Naive thymus-derived CD4-positive, alpha-beta T cell (primary cell): ENCODE measurements at regions of chr6 and their contacts with region 1.

Region 1: GRCh38 chr6:152338335-152339125 is 298.6 kb downstream of the SYNE1 start:
- DNase-seq: peak; percentile 23 to 67 (median 51)
- ATAC-seq: peak; percentile 90
- H3K4me3 ChIP-seq: no peak overlapping the region
- H3K4me3 Mint-ChIP-seq: no peak overlapping the region
- H3K27ac ChIP-seq: no peak overlapping the region
- H3K27ac Mint-ChIP-seq: no peak overlapping the region
- H3K4me1 ChIP-seq: no peaks in the 10 kb centered on the region
- H3K4me1 Mint-ChIP-seq: peaks cover 0 to 5% (median 0%) of the 10 kb centered on the region in 7 donors
- H3K27me3 ChIP-seq: no peaks in the 10 kb centered on the region
- H3K27me3 Mint-ChIP-seq: peaks cover 0 to 11% (median 0%) of the 10 kb centered on the region in 5 donors

Region 2: DNA sequence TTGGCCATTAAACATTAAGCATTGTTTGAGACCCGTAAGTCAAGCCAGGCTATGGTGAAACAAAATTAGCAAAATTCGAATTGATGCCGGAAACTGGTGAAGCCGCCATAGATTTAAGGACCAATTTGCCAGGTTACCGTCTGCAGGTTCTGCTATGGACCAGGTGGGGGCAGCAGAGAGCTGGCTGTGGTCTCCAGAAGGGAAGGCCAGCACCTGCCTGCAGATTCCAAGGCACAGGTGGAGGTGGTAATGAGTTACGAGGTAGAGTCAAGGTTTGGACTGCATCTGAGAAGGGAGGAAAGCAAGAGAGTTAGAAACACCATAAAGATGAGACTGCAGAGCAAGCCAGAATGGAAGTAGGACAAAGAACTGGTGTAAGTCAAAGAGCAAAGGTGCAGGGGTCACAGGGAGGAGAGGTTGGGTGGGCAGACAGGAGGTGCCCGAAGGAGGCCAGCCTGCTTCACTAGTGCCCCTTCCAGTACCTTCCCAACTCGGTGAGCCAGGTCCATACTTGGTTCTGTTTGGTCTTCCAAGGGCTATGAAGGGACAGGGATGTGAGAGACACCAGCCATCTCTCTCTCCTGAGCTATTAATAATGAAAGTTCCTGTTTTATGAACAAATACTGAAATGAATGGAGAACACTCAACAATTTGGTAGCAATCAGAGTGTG is 662.6 kb before region 1 on chr6:
- CTCF ChIA-PET with region 1: no interaction called
- POLR2A ChIA-PET with region 1: no interaction called
- intact Hi-C with region 1: loop called in 1 of 2 experiments (anchors 1 kb)
- DNase-seq: peak in 8 of 9 donors; percentile 8 to 54 (median 44)
- ATAC-seq: peak; percentile 79
- H3K4me3 ChIP-seq: no peak overlapping the region
- H3K4me3 Mint-ChIP-seq: no peak overlapping the region
- H3K27ac ChIP-seq: no peak overlapping the region
- H3K27ac Mint-ChIP-seq: peak overlapping the region in 1 of 9 donors; percentile 33
- H3K4me1 ChIP-seq: no peaks in the 10 kb centered on the region
- H3K4me1 Mint-ChIP-seq: peaks cover 0 to 6% (median under 1%) of the 10 kb centered on the region in 7 donors
- H3K27me3 ChIP-seq: no peaks in the 10 kb centered on the region
- H3K27me3 Mint-ChIP-seq: peaks cover 0 to 4% (median under 1%) of the 10 kb centered on the region in 5 donors

Region 3: DNA sequence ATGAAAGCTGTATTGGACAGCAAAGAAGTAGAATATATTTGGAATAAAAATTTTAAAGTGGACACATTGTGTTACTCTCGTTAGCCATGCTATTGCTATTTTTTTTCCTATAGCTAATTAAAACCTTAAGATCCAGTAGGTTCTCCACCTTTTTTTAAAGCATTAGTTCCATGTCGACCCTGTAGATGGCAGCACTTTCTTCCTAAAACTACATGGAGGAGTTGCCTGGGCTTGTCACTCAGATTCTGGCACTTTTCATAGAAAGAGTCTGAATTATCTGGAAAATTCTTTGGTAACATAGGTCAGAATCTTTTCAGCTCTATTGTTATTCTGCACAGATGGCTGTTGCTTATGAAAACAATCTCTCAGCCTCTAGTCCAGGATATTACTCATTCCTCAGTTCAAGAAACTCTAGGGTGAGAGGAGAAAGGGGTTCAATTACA is 573.1 kb before region 1 on chr6:
- CTCF ChIA-PET with region 1: no interaction called
- POLR2A ChIA-PET with region 1: no interaction called
- intact Hi-C with region 1: loop called (anchors 1 to 5 kb)
- DNase-seq: peak in 6 of 9 donors; percentile 17 to 55 (median 36)
- ATAC-seq: peak; percentile 64
- H3K4me3 ChIP-seq: no peak overlapping the region
- H3K4me3 Mint-ChIP-seq: no peak overlapping the region
- H3K27ac ChIP-seq: no peak overlapping the region
- H3K27ac Mint-ChIP-seq: no peak overlapping the region
- H3K4me1 ChIP-seq: no peaks in the 10 kb centered on the region
- H3K4me1 Mint-ChIP-seq: peaks cover 0 to 29% (median 10%) of the 10 kb centered on the region in 7 donors
- H3K27me3 ChIP-seq: no peaks in the 10 kb centered on the region
- H3K27me3 Mint-ChIP-seq: peaks cover 0 to 34% (median 7%) of the 10 kb centered on the region in 5 donors

Region 4: DNA sequence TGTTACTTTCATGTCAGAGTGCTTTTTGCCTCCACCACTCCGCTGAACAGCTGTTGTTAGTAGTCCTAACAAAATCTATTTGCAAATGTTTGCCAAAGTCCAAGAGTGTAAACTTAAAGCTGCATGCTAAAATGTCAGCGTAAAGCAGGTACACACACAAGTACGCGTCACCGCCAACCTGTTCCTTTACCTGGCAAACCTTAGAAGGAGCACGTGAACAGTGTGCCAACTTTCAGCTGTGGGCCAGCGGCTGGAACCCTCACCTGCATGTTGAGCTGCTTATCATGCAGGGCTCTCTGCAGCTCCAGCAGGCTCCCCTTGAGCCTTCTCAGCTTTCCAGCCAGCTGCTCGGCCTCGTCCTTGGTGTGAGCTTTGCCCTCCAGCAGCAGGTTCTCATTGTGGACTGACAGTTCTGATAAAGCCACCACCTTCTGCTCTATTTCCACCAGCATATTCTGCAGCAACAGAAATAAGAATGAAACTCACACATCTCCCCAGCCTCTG is 60.7 kb before region 1 on chr6:
- CTCF ChIA-PET with region 1: interaction called, 13 read pairs
- POLR2A ChIA-PET with region 1: no interaction called
- intact Hi-C with region 1: loop called in 1 of 2 experiments (anchors 1 kb)
- DNase-seq: no peak
- ATAC-seq: no peak
- H3K4me3 ChIP-seq: no peak overlapping the region
- H3K4me3 Mint-ChIP-seq: no peak overlapping the region
- H3K27ac ChIP-seq: no peak overlapping the region
- H3K27ac Mint-ChIP-seq: no peak overlapping the region
- H3K4me1 ChIP-seq: no peaks in the 10 kb centered on the region
- H3K4me1 Mint-ChIP-seq: peaks cover 0 to 2% (median 0%) of the 10 kb centered on the region in 7 donors
- H3K27me3 ChIP-seq: no peaks in the 10 kb centered on the region
- H3K27me3 Mint-ChIP-seq: no peaks in the 10 kb centered on the region

Region 5: GRCh38 chr6:152309648-152310047 is 28.9 kb before region 1 on chr6:
- CTCF ChIA-PET with region 1: interaction called, 7 read pairs
- POLR2A ChIA-PET with region 1: interaction called, 8 read pairs
- intact Hi-C with region 1: loop called in 1 of 2 experiments (anchors 1 kb)
- DNase-seq: peak; percentile 27 to 81 (median 73)
- ATAC-seq: peak; percentile 94
- H3K4me3 ChIP-seq: no peak overlapping the region
- H3K4me3 Mint-ChIP-seq: peak overlapping the region in 5 of 10 donors; percentile 17 to 59 (median 38)
- H3K27ac ChIP-seq: no peak overlapping the region
- H3K27ac Mint-ChIP-seq: peak overlapping the region in 3 of 9 donors; percentile 36 to 65 (median 39)
- H3K4me1 ChIP-seq: peaks cover 6 to 21% of the 10 kb centered on the region in 2 donors
- H3K4me1 Mint-ChIP-seq: peaks cover 7 to 35% (median 33%) of the 10 kb centered on the region in 7 donors
- H3K27me3 ChIP-seq: no peaks in the 10 kb centered on the region
- H3K27me3 Mint-ChIP-seq: peaks cover 0 to 10% (median 0%) of the 10 kb centered on the region in 5 donors

Region 6: DNA sequence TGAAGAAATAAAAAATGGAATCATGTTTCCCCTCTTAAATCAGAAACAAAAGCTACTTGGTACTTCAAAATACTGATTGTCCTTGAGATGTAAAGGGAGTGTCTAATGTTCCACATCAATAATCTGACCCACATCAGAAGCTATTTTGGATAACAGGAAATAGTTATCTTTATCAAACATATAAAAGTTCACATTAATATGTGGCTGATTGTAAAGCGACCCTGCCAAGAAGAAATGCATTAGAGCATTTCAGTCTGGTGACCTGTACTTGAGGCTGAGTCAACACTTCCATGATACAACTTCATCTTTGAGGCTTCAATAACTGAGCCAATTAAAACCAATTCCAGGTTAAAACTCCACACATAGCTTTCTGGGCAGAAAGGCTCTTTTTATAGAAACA is 266.8 kb after region 1 on chr6:
- CTCF ChIA-PET with region 1: no interaction called
- POLR2A ChIA-PET with region 1: no interaction called
- intact Hi-C with region 1: no loop called
- DNase-seq: no peak
- ATAC-seq: no peak
- H3K4me3 ChIP-seq: no peak overlapping the region
- H3K4me3 Mint-ChIP-seq: no peak overlapping the region
- H3K27ac ChIP-seq: no peak overlapping the region
- H3K27ac Mint-ChIP-seq: no peak overlapping the region
- H3K4me1 ChIP-seq: no peaks in the 10 kb centered on the region
- H3K4me1 Mint-ChIP-seq: peaks cover 0 to 3% (median 0%) of the 10 kb centered on the region in 7 donors
- H3K27me3 ChIP-seq: no peaks in the 10 kb centered on the region
- H3K27me3 Mint-ChIP-seq: peaks cover 0 to 9% (median 4%) of the 10 kb centered on the region in 5 donors

Region 7: GRCh38 chr6:153032255-153032882 is 693.8 kb after region 1 on chr6:
- CTCF ChIA-PET with region 1: no interaction called
- POLR2A ChIA-PET with region 1: no interaction called
- intact Hi-C with region 1: no loop called
- DNase-seq: peak in 1 of 9 donors; percentile 8
- ATAC-seq: no peak
- H3K4me3 ChIP-seq: no peak overlapping the region
- H3K4me3 Mint-ChIP-seq: no peak overlapping the region
- H3K27ac ChIP-seq: no peak overlapping the region
- H3K27ac Mint-ChIP-seq: no peak overlapping the region
- H3K4me1 ChIP-seq: no peaks in the 10 kb centered on the region
- H3K4me1 Mint-ChIP-seq: no peaks in the 10 kb centered on the region
- H3K27me3 ChIP-seq: no peaks in the 10 kb centered on the region
- H3K27me3 Mint-ChIP-seq: peaks cover 8 to 32% (median 15%) of the 10 kb centered on the region in 5 donors

Region 8: DNA sequence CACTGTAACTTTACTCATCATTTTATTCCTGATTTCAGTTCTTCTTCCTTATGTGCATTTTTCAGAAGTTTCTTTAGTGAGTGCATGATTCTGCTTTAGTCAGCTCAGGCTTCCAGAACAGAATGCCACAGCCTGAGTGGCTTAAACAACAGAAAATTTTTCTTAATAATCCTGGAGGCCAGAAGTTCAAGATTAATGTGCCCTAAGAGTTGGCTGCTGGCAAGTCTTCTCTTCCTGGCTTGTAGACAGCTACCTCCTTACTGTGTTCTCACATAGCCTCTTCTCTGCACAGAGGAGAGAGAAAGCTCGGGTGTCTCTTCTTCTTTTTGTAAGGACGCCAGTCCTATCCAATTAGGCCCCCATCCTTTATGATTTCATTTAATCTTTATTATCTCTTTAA is 1235.7 kb after region 1 on chr6:
- CTCF ChIA-PET with region 1: no interaction called
- POLR2A ChIA-PET with region 1: no interaction called
- intact Hi-C with region 1: no loop called
- DNase-seq: no peak
- ATAC-seq: no peak
- H3K4me3 ChIP-seq: no peak overlapping the region
- H3K4me3 Mint-ChIP-seq: no peak overlapping the region
- H3K27ac ChIP-seq: no peak overlapping the region
- H3K27ac Mint-ChIP-seq: no peak overlapping the region
- H3K4me1 ChIP-seq: no peaks in the 10 kb centered on the region
- H3K4me1 Mint-ChIP-seq: no peaks in the 10 kb centered on the region
- H3K27me3 ChIP-seq: no peaks in the 10 kb centered on the region
- H3K27me3 Mint-ChIP-seq: no peaks in the 10 kb centered on the region